HepG2 (cell line): ENCODE measurements at regions of chr10 and their contacts with region 1.

Region 1: DNA sequence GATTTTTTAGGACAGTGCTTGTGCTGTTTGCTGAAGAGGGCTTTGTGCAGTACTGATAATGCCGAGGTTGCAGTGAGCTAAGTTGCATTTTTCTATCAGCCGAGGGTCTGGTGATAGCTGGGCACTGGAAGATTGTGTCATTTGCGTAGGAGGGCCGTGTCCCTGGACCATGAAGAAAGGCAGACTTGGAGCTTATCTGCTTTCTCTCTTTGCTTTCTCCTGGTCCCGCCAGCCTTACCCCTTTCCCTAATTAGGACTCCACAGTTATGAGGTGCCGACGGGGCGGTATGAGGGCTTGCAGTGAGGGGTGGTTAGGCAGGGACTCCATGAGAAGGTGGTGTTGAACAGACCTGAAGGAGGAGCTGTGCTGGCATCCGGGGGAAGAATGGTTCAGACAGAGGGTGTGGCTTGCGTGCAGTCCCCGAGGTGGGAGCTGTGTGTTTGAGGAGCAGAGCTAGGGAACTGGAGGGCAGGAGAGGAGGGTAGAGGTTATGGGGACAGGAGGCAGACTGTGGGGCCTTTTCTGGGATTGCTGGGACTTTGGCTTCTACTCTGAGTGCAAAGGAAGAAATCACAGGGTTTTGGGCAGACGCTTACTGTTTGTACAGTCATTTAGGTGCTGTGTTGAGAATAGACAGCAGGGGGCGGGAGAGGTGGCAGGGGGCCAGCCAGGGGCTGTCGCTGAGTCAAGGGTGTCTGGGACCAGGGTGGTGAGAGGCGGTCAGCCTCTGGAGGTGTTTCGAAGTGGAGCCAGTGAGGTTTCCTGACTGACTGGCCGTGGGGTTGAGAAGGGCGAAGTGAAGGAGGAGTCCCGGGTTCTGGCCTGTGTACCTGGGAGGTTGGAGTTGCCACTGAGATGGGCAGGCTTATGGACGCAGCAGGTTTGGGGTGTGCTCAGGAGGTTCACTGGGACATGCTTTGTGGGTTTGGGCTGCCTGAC is 43.4 kb downstream of the PRF1 start:
- DNase-seq: peak; percentile 48
- ATAC-seq: peak; percentile 87
- H3K4me3 ChIP-seq: peak overlapping the region in 2 of 3 experiments; percentile 15 to 57; a peak in 1 of 6 replicates
- H3K27ac ChIP-seq: no peak overlapping the region
- H3K4me1 ChIP-seq: peaks cover 11% of the 10 kb centered on the region; the same call in 1 of the 2 replicates
- H3K27me3 ChIP-seq: peaks cover 2% of the 10 kb centered on the region in 2 experiments; a peak in 2 of 5 replicates
- CTCF ChIP-seq: peak; percentile 76
- EP300 ChIP-seq: no peak
- POLR2A ChIP-seq: no peak
- RAD21 ChIP-seq: peak; percentile 50; the same call in 1 of the 2 replicates

Region 2: GRCh38 chr10:70596110-70596798 is 37.1 kb after region 1 on chr10:
- CTCF ChIA-PET with region 1: no interaction called
- POLR2A ChIA-PET with region 1: no interaction called
- in situ Hi-C with region 1: no loop called
- intact Hi-C with region 1: loop called (anchors 1 kb)
- DNase-seq: peak; percentile 89
- ATAC-seq: peak; percentile 91
- H3K4me3 ChIP-seq: peak overlapping the region; percentile 21 to 59 (median 40); a peak in 3 of 6 replicates
- H3K27ac ChIP-seq: peak overlapping the region; percentile 58
- H3K4me1 ChIP-seq: peaks cover 39% of the 10 kb centered on the region
- H3K27me3 ChIP-seq: no peaks in the 10 kb centered on the region
- CTCF ChIP-seq: no peak
- EP300 ChIP-seq: peak in 1 of 2 experiments; percentile 34; a peak in 1 of 4 replicates
- POLR2A ChIP-seq: no peak
- RAD21 ChIP-seq: no peak